ENCODE measurements at regions of chr12 and their contacts with region 1.

Region 1: DNA sequence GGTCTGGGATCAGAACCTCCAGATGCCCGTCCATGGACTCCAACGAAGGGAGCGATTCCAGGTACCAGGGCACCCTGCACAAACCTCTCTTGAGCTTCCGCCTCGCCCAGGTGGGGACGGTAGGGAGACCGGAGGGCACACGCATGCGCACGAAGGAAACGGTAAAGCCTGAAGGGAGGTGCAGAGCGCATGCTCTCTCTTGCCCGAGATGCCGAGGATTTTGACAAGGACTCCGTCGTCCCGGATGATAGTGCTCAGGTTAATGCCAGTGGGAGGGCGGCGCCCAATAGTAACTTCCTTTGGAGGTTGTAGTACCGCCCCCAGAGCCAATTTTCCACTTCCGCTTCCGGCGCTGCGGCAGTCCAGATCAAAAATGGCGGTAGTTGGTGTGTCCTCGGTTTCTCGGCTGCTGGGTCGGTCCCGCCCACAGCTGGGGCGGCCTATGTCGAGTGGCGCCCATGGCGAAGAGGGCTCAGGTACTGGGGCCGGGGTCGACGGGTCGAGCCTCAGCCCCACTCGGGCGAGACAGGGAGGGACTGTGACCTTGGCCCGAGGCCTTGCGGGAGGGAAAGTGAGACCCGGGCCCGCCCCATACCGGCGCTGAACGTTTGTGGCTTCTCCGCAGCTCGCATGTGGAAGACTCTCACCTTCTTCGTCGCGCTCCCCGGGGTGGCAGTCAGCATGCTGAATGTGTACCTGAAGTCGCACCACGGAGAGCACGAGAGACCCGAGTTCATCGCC is at the start of gene COX6A1:
- DNase-seq: peak; percentile 98
- H3K4me3 ChIP-seq: peak within 1 kb of the TSS; percentile 47 to 99 (median 82)
- H3K27ac ChIP-seq: peak within 1 kb of the TSS; percentile 61
- H3K4me1 ChIP-seq: peaks cover 14% of the 10 kb centered on the region
- H3K27me3 ChIP-seq: no peaks in the 10 kb centered on the region
- CTCF ChIP-seq: peak in 1 of 2 donors; percentile 21
- total RNA-seq, gene COX6A1: 306 to 422 TPM

Region 2: GRCh38 chr12:120469450-120470149 is 31.7 kb after region 1 on chr12 and contains the start of gene SRSF9:
- CTCF ChIA-PET with region 1: no interaction called
- dilution Hi-C with region 1: no loop called
- in situ Hi-C with region 1: no loop called
- intact Hi-C with region 1: loop called (anchors 1 kb)
- DNase-seq: peak; percentile 91
- H3K4me3 ChIP-seq: peak within 1 kb of the TSS; percentile 79 to 92 (median 79)
- H3K27ac ChIP-seq: peak within 1 kb of the TSS; percentile 64
- H3K4me1 ChIP-seq: peaks cover 16% of the 10 kb centered on the region
- H3K27me3 ChIP-seq: no peaks in the 10 kb centered on the region
- CTCF ChIP-seq: peak; percentile 62 to 93
- total RNA-seq, gene SRSF9: 84.7 to 205 TPM

Region 3: DNA sequence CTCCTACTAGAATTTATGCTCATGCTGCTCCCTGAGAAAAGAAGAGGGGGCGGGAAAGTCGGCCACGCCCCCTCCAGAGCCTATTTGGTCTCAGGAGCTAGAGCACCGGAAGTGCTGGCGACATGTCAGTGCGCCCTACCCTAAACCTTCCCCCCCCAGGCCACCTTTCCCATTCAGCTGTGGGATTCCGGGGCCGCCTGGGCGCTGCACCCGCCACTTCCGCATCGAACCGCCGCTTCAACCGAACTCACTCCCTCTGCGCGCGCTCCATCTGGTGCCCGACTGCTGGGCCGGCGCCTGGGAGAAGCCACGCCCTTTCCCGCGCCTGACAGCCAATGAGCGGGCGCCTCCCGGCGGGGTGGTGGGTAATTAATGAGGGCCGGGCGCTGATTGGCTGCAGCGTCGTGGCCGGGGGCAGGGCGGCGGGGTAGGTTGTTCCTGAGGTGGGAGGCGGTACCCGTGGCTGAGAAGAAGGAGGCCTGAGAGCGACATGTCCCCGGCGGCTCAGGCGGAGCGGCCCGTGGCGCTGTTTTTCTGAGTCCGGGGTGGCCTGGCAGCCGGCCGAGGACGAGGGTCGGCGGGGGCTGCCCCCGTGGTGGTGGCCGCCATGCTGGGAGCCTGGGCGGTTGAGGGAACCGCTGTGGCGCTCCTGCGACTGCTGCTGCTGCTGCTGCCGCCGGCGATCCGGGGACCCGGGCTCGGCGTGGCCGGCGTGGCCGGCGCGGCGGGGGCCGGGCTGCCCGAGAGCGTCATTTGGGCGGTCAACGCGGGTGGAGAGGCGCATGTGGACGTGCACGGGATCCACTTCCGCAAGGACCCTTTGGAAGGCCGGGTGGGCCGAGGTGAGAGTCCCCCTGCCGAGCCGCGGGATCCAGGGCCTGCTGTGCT is 249.0 kb after region 1 on chr12 and contains the start of gene MLEC:
- CTCF ChIA-PET with region 1: no interaction called
- dilution Hi-C with region 1: no loop called
- in situ Hi-C with region 1: no loop called
- intact Hi-C with region 1: loop called (anchors 1 kb)
- DNase-seq: peak; percentile 98
- H3K4me3 ChIP-seq: peak within 1 kb of the TSS; percentile 73 to 98 (median 82)
- H3K27ac ChIP-seq: peak within 1 kb of the TSS; percentile 89
- H3K4me1 ChIP-seq: peaks cover 28% of the 10 kb centered on the region
- H3K27me3 ChIP-seq: no peaks in the 10 kb centered on the region
- CTCF ChIP-seq: peak in 1 of 2 donors; percentile 24
- total RNA-seq, gene MLEC: 64.7 to 114 TPM

Measured in mammary epithelial cell (primary cell).